AG04449 (cell line): ENCODE measurements at regions of chr1 and their contacts with region 1.

Region 1: DNA sequence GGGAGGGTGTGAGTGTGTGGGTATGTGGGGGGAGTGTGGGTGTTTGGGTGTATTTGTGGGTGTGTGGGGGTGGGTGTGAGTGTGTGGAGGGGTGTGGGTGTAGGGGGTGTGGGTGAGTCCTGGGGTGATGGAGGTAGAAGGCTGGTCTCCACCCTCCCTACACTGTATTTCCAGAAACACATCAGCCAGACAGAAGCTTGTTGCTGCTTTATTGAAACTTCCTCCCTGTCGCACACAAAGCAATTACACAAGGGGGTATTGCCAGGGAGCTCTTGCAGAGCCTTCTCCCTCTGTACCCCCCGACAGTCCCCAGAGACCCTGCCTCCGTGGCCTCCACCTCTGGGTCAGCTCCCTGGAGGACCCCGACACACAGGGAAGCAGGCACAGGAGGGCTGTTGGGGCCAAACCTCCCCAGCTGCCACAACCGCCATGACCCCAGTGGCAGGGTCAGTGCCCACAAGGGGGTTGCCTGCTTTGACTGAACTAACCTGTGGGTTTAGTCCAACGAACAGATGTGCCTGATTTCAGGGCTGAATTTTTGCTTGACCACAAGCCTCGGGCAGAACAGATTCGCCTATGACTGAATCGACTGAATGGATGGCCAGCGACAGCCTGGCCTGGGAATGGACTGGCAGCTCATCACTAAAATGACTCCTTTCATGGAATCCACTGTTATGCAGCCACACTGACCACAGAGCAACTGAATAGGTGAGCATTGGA is 9.1 kb upstream of the MATN1 start:
- DNase-seq: no peak
- H3K4me3 ChIP-seq: no peak overlapping the region
- CTCF ChIP-seq: no peak

Region 2: GRCh38 chr1:30911046-30911954 is 178.9 kb after region 1 on chr1:
- CTCF ChIA-PET with region 1: interaction called, 11 read pairs
- POLR2A ChIA-PET with region 1: no interaction called
- DNase-seq: no peak
- H3K4me3 ChIP-seq: no peak overlapping the region
- CTCF ChIP-seq: peak; percentile 94